Body of pancreas (tissue), 4 donors: ENCODE measurements at regions of chr13 and their contacts with region 1.

Region 1: GRCh38 chr13:31424117-31424729 is 224.4 kb downstream of the B3GLCT start:
- DNase-seq: peak; percentile 75 to 80 (median 76)
- ATAC-seq: peak; percentile 89
- H3K4me3 ChIP-seq: no peak overlapping the region
- H3K27ac ChIP-seq: no peak overlapping the region
- H3K4me1 ChIP-seq: peaks cover 3% of the 10 kb centered on the region
- H3K27me3 ChIP-seq: no peaks in the 10 kb centered on the region
- CTCF ChIP-seq: peak; percentile 72 to 84 (median 77)
- POLR2A ChIP-seq: no peak

Region 2: GRCh38 chr13:31236211-31236786 is 187.9 kb before region 1 on chr13:
- intact Hi-C with region 1: loop called (anchors 10 kb)
- DNase-seq: peak in 1 of 4 donors; percentile 18
- ATAC-seq: no peak
- H3K4me3 ChIP-seq: no peak overlapping the region
- H3K27ac ChIP-seq: no peak overlapping the region
- H3K4me1 ChIP-seq: no peaks in the 10 kb centered on the region
- H3K27me3 ChIP-seq: no peaks in the 10 kb centered on the region
- CTCF ChIP-seq: peak; percentile 28 to 74 (median 54)
- POLR2A ChIP-seq: no peak

Region 3: DNA sequence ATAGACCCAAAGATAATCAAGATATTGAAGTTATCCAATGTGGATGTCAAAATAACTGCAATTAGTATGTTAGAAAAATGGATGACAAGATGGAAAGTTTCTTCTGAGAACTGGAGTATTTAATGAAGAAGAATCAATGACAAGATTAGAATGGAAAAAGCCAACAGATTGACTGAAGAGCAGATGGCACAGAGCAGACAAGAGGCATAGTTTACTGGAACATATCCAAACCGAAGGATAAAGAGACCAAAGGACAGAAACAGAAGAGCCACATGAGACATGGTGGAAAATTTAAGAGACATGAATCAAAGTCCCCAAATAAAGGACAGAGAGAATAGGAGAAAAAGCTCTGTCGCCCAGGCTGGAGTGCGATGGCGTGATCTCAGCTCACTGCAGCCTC is 225.5 kb after region 1 on chr13:
- intact Hi-C with region 1: no loop called
- DNase-seq: no peak
- ATAC-seq: no peak
- H3K4me3 ChIP-seq: no peak overlapping the region
- H3K27ac ChIP-seq: no peak overlapping the region
- H3K4me1 ChIP-seq: no peaks in the 10 kb centered on the region
- H3K27me3 ChIP-seq: no peaks in the 10 kb centered on the region
- CTCF ChIP-seq: no peak
- POLR2A ChIP-seq: no peak